Activated T-helper 2 cell treated with anti-CD3 and anti-CD28 coated beads, Interferon-gamma antibody, Interleukin-2, Interleukin-4, amounts not matched to agents 10 μg/mL and 5 μg/mL and 100 μg/mL, durations not matched to agents 14 hours and 24 hours and 36 hours (primary cell): ENCODE measurements at regions of chr4 and their contacts with region 1.

Region 1: GRCh38 chr4:139950568-139950967 is 203.4 kb downstream of the MAML3 start:
- DNase-seq: peak; percentile 43
- H3K4me3 Mint-ChIP-seq: peak overlapping the region; percentile 40
- H3K27ac Mint-ChIP-seq: peak overlapping the region; percentile 83
- H3K4me1 Mint-ChIP-seq: peaks cover 27% of the 10 kb centered on the region
- H3K27me3 Mint-ChIP-seq: peaks cover 9% of the 10 kb centered on the region

Region 2: GRCh38 chr4:139656614-139657486 is 293.7 kb before region 1 on chr4:
- intact Hi-C with region 1: loop called (anchors 5 kb)
- DNase-seq: peak; percentile 36
- H3K4me3 Mint-ChIP-seq: peak overlapping the region; percentile 77
- H3K27ac Mint-ChIP-seq: peak overlapping the region; percentile 93
- H3K4me1 Mint-ChIP-seq: peaks cover 27% of the 10 kb centered on the region
- H3K27me3 Mint-ChIP-seq: no peaks in the 10 kb centered on the region

Region 3: DNA sequence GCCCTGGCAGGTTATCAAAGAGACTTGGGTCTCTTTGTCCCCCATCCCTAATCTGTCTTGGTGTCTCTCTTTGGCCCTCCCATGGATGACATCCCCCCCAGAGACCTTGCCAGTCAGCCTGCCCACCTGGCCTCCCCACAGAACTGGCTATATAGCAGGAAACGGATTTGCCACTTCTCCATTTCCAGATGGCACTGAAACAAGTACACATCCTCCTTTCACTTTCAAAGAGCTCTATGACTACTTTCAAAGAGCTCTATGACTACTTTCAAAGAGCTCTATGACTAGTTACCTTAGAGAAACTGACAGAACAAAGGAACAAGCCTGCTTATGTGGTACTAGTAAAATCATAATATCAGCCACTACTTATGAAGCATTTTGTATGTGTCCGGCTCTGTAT is 28.1 kb after region 1 on chr4:
- intact Hi-C with region 1: loop called (anchors 2 kb)
- DNase-seq: peak; percentile 9
- H3K4me3 Mint-ChIP-seq: no peak overlapping the region
- H3K27ac Mint-ChIP-seq: no peak overlapping the region
- H3K4me1 Mint-ChIP-seq: peaks cover 30% of the 10 kb centered on the region
- H3K27me3 Mint-ChIP-seq: peaks cover 3% of the 10 kb centered on the region

Region 4: DNA sequence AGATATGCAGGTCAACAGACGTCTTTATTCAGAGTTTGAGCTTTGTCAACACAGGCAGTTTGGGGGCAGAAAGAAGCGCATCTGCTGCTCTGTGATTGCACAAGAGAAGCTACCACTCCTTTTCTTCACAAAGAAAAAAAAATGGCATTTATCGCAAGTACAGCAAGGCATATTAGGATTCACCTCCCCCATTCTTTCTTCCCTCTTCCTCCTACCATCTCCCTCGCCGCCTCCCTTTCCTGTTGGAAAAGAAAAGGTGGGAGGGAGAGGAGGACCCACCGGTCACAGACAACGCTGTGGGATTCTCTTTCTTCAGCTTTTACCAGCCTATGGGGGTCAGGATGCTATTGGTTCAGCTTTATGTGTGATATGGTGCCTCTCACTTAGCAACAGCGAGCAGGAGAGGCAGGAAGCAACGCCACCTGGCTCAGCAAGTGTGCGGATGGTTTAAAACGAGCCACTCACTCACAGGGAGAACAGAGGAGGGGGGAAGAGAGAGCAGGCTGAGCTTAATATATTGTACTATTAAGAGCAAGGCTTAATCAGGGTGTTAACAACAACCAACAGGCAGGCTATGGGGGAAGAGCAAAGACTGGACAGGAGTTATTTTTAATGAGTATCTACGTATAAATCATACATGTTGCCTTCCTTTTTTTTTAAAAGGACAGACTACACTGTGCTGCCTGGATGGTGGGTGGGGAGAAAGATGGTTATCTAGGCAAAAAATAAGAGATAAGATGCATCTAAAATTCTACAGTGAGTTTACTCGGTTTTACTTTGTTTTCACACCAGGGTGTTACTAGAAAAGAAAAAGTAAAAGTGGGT is 98.7 kb after region 1 on chr4:
- intact Hi-C with region 1: loop called (anchors 5 kb)
- DNase-seq: peak; percentile 52
- H3K4me3 Mint-ChIP-seq: peak overlapping the region; percentile 74
- H3K27ac Mint-ChIP-seq: peak overlapping the region; percentile 78
- H3K4me1 Mint-ChIP-seq: peaks cover 55% of the 10 kb centered on the region
- H3K27me3 Mint-ChIP-seq: peaks cover 36% of the 10 kb centered on the region

Region 5: GRCh38 chr4:140103676-140104075 is 153.1 kb after region 1 on chr4:
- intact Hi-C with region 1: loop called (anchors 2 kb)
- DNase-seq: peak; percentile 42
- H3K4me3 Mint-ChIP-seq: no peak overlapping the region
- H3K27ac Mint-ChIP-seq: peak overlapping the region; percentile 54
- H3K4me1 Mint-ChIP-seq: peaks cover 66% of the 10 kb centered on the region
- H3K27me3 Mint-ChIP-seq: peaks cover 3% of the 10 kb centered on the region